ENCODE measurements at regions of chrX and their contacts with region 1.

Region 1: DNA sequence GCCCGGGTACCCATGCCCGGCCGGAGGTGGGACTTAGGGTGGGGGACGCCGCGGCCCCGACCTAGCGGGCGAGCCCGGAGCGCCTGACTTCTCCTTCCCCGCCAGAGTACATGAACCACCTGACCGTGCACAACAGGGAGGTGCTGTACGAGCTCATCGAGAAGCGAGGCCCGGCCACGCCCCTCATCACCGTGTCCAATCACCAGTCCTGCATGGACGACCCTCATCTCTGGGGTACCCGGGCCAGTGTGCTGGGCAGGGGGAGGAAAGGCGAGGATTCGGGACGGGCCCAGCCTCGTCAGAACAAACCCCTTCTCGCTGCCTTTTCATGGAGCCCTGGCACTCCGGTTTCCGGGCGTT is 622 bp downstream of the TAFAZZIN start:
- H3K4me3 Mint-ChIP-seq: peak overlapping the region; percentile 92
- H3K27ac Mint-ChIP-seq: peak overlapping the region; percentile 89
- H3K4me1 Mint-ChIP-seq: peaks cover 35% of the 10 kb centered on the region
- H3K27me3 Mint-ChIP-seq: no peaks in the 10 kb centered on the region

Region 2: DNA sequence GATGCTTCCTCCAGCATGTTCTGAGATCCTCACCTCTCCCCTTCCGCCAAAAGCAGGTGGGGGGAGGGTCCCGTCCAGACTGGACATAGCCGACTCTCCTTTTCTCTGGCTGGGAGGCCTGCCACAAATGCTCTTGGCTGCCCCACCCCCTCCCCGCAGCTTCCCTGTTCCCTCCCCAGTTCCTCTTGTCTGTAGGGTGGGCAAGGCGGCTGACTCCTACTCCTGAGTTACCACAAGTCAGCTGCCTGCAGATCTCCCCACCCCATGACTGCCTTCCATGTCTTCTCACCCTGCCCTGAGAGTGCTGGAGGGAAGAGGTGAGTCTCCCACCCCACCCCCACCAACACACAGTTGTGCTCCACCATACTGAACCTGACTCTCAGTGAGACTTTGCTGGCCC is 19.4 kb after region 1 on chrX:
- intact Hi-C with region 1: loop called (anchors 2 kb)
- H3K4me3 Mint-ChIP-seq: peak overlapping the region; percentile 81
- H3K27ac Mint-ChIP-seq: peak overlapping the region; percentile 89
- H3K4me1 Mint-ChIP-seq: peaks cover 57% of the 10 kb centered on the region
- H3K27me3 Mint-ChIP-seq: no peaks in the 10 kb centered on the region

Region 3: GRCh38 chrX:154458114-154458953 is 46.4 kb after region 1 on chrX and contains the start of gene PLXNA3:
- intact Hi-C with region 1: loop called (anchors 10 kb)
- H3K4me3 Mint-ChIP-seq: peak within 1 kb of the TSS; percentile 93
- H3K27ac Mint-ChIP-seq: peak within 1 kb of the TSS; percentile 92
- H3K4me1 Mint-ChIP-seq: peaks cover 30% of the 10 kb centered on the region
- H3K27me3 Mint-ChIP-seq: peaks cover 10% of the 10 kb centered on the region

Region 4: GRCh38 chrX:154495472-154495922 is 83.5 kb after region 1 on chrX:
- intact Hi-C with region 1: no loop called
- H3K4me3 Mint-ChIP-seq: no peak overlapping the region
- H3K27ac Mint-ChIP-seq: no peak overlapping the region
- H3K4me1 Mint-ChIP-seq: peaks cover 6% of the 10 kb centered on the region
- H3K27me3 Mint-ChIP-seq: peaks cover 2% of the 10 kb centered on the region

Measured in dendritic cell treated with granulocyte-macrophage colony-stimulating factor and Interleukin-4, amounts not matched to agents 40 ng/mL and 50 ng/mL, for 4 days (primary cell).